Spleen (tissue), 13 donors: ENCODE measurements at regions of chr1 and their contacts with region 1.

Region 1: GRCh38 chr1:70617728-70618127 is 206.7 kb downstream of the CTH start:
- DNase-seq: no peak
- H3K4me3 ChIP-seq: no peak overlapping the region
- H3K27ac ChIP-seq: no peak overlapping the region
- H3K4me1 ChIP-seq: no peaks in the 10 kb centered on the region
- H3K27me3 ChIP-seq: no peaks in the 10 kb centered on the region
- CTCF ChIP-seq: no peak
- POLR2A ChIP-seq: no peak

Region 2: DNA sequence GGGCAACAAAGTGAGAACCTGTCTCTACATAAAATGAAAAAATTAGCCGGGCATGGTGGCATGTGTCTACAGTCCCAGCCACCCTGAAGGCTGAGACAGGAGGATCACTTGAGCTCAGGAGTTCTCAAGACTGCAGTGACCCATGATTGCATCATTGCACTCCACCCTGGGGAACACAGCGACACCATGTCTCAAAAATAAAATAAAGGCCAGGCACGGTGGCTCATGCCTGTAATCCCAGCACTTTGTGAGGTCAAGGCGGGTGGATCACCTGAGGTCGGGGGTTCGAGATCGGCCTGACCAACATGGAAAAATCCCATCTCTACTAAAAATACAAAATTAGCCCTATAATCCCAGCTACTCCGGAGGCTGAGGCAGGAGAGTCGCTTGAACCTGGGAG is 283.3 kb before region 1 on chr1:
- intact Hi-C with region 1: no loop called
- DNase-seq: no peak
- H3K4me3 ChIP-seq: no peak overlapping the region
- H3K27ac ChIP-seq: no peak overlapping the region
- H3K4me1 ChIP-seq: peaks cover 0 to 5% (median 0%) of the 10 kb centered on the region in 6 donors
- H3K27me3 ChIP-seq: no peaks in the 10 kb centered on the region
- CTCF ChIP-seq: no peak
- POLR2A ChIP-seq: no peak

Region 3: DNA sequence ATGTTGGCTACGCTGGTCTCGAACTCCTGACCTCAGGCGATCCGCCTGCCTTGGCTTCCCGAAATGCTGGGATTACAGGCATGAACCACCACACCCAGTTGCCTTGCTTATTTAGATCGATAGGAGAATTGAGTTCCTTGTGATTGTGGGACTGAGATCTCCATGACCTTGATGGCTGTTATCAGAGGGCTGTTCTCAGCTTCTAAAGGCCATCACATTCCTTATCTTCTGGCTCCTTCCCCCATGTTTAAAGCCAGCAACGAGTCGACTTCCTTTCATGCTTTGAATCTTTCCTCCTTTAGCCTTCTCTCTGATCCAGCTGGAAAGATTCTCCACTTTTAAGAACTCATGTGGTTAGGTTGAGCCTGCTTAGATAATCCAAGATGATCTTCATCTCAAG is 168.7 kb before region 1 on chr1:
- intact Hi-C with region 1: no loop called
- DNase-seq: no peak
- H3K4me3 ChIP-seq: no peak overlapping the region
- H3K27ac ChIP-seq: no peak overlapping the region
- H3K4me1 ChIP-seq: no peaks in the 10 kb centered on the region
- H3K27me3 ChIP-seq: no peaks in the 10 kb centered on the region
- CTCF ChIP-seq: no peak
- POLR2A ChIP-seq: no peak

Region 4: DNA sequence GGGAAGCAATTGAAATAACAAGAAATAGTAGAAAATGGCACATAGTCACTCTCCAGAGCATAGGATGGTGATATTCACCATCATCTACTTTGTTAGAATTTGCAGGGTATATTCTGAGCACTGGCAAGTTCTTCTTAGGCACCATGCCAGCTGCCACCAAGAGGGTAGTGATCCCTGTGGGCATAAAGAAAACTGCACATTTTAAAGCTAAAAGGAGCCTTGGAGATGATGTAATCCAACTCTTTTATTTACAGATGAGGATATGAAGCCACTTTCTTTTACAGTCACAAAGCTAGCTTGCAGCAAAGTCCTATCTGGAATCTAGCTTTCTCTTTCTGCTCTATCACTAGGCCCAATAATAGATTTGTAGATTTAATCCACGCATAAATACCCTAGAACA is 360.9 kb after region 1 on chr1:
- intact Hi-C with region 1: no loop called
- DNase-seq: no peak
- H3K4me3 ChIP-seq: no peak overlapping the region
- H3K27ac ChIP-seq: peak overlapping the region in 1 of 8 donors; percentile 13
- H3K4me1 ChIP-seq: peaks cover 0 to 23% (median 11%) of the 10 kb centered on the region in 6 donors
- H3K27me3 ChIP-seq: no peaks in the 10 kb centered on the region
- CTCF ChIP-seq: no peak
- POLR2A ChIP-seq: no peak

Region 5: GRCh38 chr1:71128060-71128459 is 510.3 kb after region 1 on chr1:
- intact Hi-C with region 1: loop called (anchors 10 kb)
- DNase-seq: no peak
- H3K4me3 ChIP-seq: no peak overlapping the region
- H3K27ac ChIP-seq: no peak overlapping the region
- H3K4me1 ChIP-seq: no peaks in the 10 kb centered on the region
- H3K27me3 ChIP-seq: no peaks in the 10 kb centered on the region
- CTCF ChIP-seq: no peak
- POLR2A ChIP-seq: no peak